ENCODE measurements at regions of chr12 and their contacts with region 1.

Region 1: GRCh38 chr12:103771466-103771865 is 69.6 kb downstream of the NT5DC3 start:
- DNase-seq: peak in 1 of 2 donors; percentile 34
- ATAC-seq: peak; percentile 39 to 61
- H3K4me3 ChIP-seq: no peak overlapping the region
- H3K27ac ChIP-seq: no peak overlapping the region
- H3K4me1 ChIP-seq: peaks cover 5 to 6% of the 10 kb centered on the region in 2 donors
- H3K27me3 ChIP-seq: no peaks in the 10 kb centered on the region
- CTCF ChIP-seq: peak; percentile 39 to 78 (median 58)
- POLR2A ChIP-seq: no peak

Region 2: GRCh38 chr12:103586132-103586531 is 185.3 kb before region 1 on chr12:
- in situ Hi-C with region 1: no loop called
- intact Hi-C with region 1: no loop called
- DNase-seq: no peak
- ATAC-seq: no peak
- H3K4me3 ChIP-seq: no peak overlapping the region
- H3K27ac ChIP-seq: no peak overlapping the region
- H3K4me1 ChIP-seq: no peaks in the 10 kb centered on the region
- H3K27me3 ChIP-seq: no peaks in the 10 kb centered on the region
- CTCF ChIP-seq: no peak
- POLR2A ChIP-seq: no peak

Region 3: DNA sequence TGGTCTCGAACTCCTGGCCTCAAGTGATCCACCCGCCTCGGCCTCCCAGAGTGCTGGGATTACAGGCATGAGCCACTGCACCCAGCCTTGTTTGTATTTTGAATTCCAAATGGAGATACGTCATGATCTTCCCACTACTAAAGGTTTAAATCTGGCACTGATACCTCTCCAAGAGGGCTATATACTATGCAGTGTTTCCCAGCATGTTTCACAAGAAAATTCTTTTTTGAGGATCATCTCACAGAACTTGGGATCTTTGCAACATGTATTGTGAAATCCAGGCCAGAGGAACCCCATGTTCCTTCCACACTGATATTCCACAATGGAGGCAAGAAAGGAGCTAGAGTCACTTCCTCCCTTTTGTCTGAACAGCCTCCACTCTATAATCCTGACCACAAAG is 43.1 kb before region 1 on chr12:
- in situ Hi-C with region 1: no loop called
- intact Hi-C with region 1: no loop called
- DNase-seq: no peak
- ATAC-seq: no peak
- H3K4me3 ChIP-seq: no peak overlapping the region
- H3K27ac ChIP-seq: no peak overlapping the region
- H3K4me1 ChIP-seq: no peaks in the 10 kb centered on the region
- H3K27me3 ChIP-seq: no peaks in the 10 kb centered on the region
- CTCF ChIP-seq: no peak
- POLR2A ChIP-seq: no peak

Region 4: GRCh38 chr12:103868215-103868614 is 96.7 kb after region 1 on chr12:
- in situ Hi-C with region 1: no loop called
- intact Hi-C with region 1: loop called (anchors 2 kb)
- DNase-seq: no peak
- ATAC-seq: no peak
- H3K4me3 ChIP-seq: no peak overlapping the region
- H3K27ac ChIP-seq: no peak overlapping the region
- H3K4me1 ChIP-seq: no peaks in the 10 kb centered on the region
- H3K27me3 ChIP-seq: no peaks in the 10 kb centered on the region
- CTCF ChIP-seq: no peak
- POLR2A ChIP-seq: no peak

Region 5: GRCh38 chr12:103877934-103878510 is 106.6 kb after region 1 on chr12:
- in situ Hi-C with region 1: no loop called
- intact Hi-C with region 1: loop called (anchors 2 kb)
- DNase-seq: peak; percentile 29 to 41
- ATAC-seq: peak; percentile 85 to 90
- H3K4me3 ChIP-seq: no peak overlapping the region
- H3K27ac ChIP-seq: no peak overlapping the region
- H3K4me1 ChIP-seq: no peaks in the 10 kb centered on the region
- H3K27me3 ChIP-seq: no peaks in the 10 kb centered on the region
- CTCF ChIP-seq: peak; percentile 46 to 77 (median 62)
- POLR2A ChIP-seq: no peak